ENCODE measurements at regions of chr17 and their contacts with region 1.

Region 1: GRCh38 chr17:14118951-14119350 is 49.6 kb downstream of the COX10 start:
- DNase-seq: no peak
- H3K4me3 Mint-ChIP-seq: peak overlapping the region; percentile 28
- H3K27ac Mint-ChIP-seq: peak overlapping the region; percentile 93
- H3K4me1 Mint-ChIP-seq: peaks cover 84% of the 10 kb centered on the region
- H3K27me3 Mint-ChIP-seq: no peaks in the 10 kb centered on the region

Region 2: GRCh38 chr17:14196377-14196997 is 77.5 kb after region 1 on chr17:
- CTCF ChIA-PET with region 1: no interaction called
- POLR2A ChIA-PET with region 1: interaction called, 11 read pairs
- DNase-seq: peak; percentile 33
- H3K4me3 Mint-ChIP-seq: peak overlapping the region; percentile 53
- H3K27ac Mint-ChIP-seq: peak overlapping the region; percentile 98
- H3K4me1 Mint-ChIP-seq: peaks cover 88% of the 10 kb centered on the region
- H3K27me3 Mint-ChIP-seq: no peaks in the 10 kb centered on the region

Measured in activated CD4-positive, alpha-beta memory T cell treated with anti-CD3 and anti-CD28 coated beads, Interleukin-2, amount 10 ng/mL, durations not matched to agents 7 days and 5 days (primary cell).